A673 (cell line): ENCODE measurements at regions of chr9 and their contacts with region 1.

Region 1: GRCh38 chr9:16133556-16134227 is 580.8 kb downstream of the CCDC171 start:
- DNase-seq: peak; percentile 79
- H3K4me3 ChIP-seq: no peak overlapping the region
- H3K27ac ChIP-seq: no peak overlapping the region
- H3K4me1 ChIP-seq: peaks cover 12% of the 10 kb centered on the region
- H3K27me3 ChIP-seq: no peaks in the 10 kb centered on the region
- CTCF ChIP-seq: peak; percentile 69

Region 2: DNA sequence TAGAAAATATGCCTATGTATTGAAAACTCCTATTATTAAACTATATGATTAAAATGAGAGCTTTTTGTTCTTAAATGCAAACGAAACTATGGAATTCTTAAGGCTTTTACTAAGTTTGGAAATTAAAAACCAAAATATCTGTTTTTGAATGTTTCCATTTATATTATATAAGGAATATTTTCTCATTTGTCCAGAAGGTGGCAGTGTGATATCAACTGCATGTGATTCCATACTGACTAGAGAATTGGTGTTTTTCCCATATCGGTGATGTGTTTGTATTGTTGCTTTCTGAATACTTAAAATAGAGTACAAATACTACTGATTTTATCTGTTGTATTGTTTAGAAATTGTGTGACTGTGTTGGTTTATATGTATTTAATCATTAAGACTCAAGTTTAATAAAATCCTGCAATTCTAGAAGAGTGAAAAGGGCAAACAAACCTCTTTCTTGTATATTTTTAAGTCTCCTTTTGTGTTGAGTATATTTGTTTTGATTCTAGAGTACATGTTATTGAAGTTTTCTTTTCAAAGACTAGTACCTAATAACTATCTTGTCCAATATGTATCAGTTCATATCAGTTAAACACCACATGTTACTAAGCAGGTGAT is 260.0 kb before region 1 on chr9:
- CTCF ChIA-PET with region 1: no interaction called
- POLR2A ChIA-PET with region 1: no interaction called
- intact Hi-C with region 1: loop called (anchors 5 kb)
- DNase-seq: peak; percentile 67
- H3K4me3 ChIP-seq: peak overlapping the region; percentile 31
- H3K27ac ChIP-seq: peak overlapping the region; percentile 77
- H3K4me1 ChIP-seq: peaks cover 51% of the 10 kb centered on the region
- H3K27me3 ChIP-seq: no peaks in the 10 kb centered on the region
- CTCF ChIP-seq: peak; percentile 60